Left cardiac atrium (tissue), 4 donors: ENCODE measurements at regions of chr20 and their contacts with region 1.

Region 1: DNA sequence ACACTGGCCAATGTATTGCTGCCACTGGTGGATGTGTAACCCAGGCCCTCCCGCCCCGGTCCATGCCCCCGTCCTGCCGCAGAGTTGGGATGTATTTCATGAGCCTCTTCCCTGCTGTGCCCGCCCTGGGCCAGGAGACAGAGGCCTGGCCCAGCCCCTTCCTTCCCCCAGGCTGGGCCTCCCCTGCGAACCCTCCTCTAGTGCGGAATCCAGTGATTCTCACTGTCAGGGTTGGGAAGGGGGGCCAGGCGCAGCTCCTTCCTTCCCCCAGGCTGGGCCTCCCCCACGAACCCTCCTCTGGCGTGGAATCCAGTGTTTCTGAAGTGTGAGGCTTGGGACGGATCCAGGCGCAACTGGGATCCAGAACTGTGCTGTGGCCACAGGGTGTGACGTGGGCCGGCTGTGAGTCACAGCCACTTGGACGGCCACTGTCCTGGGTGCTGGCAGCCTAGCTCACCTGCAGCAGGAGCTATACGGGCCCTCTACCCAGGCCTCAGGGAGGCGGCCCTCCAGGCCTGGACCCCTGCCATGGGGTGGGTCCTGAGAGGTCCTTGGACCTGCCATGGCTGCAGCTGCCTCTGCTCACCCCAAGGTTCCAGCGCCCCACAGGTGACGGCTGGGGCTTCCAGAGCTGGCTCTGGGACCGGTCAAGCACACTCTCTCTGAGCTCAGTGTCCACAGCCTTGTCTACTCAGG is 28.3 kb downstream of the COL20A1 start:
- DNase-seq: peak; percentile 88
- ATAC-seq: peak; percentile 91 to 92

Region 2: DNA sequence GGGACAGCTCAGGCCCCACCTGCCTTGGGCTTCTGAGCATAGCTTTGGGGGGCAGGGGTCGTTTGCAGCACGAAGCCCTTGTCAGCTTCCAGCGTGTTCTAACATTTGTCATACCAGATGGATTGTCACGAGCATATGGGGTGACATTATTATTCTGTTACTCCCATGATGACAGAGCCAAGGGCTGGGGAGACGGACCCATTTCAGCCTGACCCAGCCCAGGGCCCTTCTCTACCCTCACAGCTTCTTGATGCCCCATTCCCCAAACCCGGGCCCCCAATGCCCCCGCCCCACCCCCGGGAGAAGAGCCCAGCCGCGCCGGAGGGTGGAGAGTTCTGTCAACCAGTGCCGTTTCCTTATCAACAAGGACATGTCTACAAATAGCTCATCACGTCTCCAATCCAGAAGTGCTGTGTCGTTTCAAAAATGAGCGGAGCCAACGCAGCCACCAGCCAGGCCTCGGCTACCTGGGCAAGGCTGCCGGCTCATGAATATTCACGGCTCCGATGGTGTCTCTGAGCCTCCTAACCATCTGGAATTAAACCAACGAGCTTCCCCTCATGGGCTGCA is 49.4 kb after region 1 on chr20:
- intact Hi-C with region 1: loop called in 1 of 2 experiments (anchors 2 kb)
- DNase-seq: no peak
- ATAC-seq: peak; percentile 51 to 63

Region 3: DNA sequence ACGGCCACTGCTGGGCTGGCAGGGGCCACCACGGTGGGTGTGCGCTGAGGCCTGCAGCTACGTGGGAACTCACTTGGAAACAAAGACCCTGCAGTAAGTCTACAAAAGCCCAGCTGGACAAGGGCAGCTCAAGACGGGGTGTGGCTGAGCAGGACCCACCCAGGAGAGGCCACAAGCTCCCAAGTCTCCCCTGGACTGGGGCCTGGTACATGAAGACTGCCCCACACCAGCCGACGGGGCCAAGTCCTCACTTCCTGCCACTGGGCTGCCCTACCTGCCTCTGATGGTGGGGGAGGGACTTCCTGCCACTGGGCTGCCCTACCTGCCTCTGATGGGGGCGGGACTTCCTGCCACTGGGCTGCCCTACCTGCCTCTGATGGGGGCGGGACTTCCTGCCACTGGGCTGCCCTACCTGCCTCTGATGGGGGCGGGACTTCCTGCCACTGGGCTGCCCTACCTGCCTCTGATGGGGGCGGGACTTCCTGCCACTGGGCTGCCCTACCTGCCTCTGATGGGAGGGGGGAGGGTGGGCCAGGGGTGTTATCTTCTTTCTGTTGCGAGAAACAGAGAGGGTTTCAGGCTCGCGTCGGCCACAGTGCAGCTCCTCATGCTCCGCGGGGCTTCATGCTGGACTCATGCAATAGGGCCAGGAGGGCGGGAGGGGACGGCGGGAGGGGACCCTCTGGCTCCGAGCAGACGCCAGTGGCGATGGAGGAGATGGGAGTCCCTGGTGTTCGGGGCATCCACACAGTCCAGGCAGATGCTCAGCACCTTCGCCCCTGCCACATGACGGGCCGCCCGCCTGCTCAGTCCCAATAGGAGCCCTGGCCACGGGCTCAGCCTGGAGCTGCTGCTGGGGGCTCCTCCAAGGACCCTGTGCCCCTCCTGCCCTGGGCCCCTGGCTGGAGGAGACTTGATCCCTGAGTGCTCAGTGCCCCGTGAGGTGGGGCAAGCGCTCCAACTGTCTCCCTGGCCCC is 88.5 kb after region 1 on chr20:
- intact Hi-C with region 1: no loop called
- DNase-seq: no peak
- ATAC-seq: no peak